ENCODE measurements at regions of chr1 and their contacts with region 1.

Region 1: DNA sequence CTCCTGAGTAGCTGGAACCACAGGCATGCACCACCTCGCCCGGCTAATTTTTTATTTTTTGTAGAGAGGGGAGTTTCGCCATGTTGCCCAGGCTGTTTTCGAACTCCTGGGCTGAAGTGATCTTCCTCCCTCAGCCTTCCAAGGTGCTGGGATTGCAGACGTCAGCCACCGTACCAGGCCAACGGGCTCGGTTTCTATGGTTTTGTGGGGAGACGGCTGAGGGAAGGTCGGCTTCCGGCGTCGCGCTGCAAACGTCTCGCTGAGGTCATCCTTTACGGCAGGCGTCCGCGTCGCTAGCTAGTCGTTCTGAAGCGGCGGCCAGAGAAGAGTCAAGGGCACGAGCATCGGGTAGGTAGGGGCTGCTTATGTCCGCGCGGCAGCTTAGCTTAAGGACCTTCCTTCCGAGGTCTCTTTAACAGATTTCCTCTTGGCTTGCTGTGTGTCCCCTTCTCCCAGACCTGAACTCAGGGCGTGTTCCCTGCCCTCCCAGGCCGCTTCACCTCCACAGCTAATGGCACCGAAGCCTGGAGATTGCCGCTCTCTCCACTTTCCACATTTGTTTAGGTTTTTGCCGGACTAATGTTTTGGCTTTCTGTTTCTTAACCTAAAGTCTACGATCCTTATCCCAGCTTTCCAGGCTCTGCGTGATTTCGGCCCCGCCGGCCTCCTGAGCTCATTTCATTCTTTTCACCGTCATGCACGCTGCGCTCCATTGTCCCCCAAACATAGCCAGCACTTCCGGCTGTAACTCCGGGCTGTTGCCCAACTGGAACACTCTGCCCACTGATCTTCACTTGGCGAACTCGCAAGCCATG is at the start of gene NDUFS5:
- DNase-seq: peak; percentile 76
- ATAC-seq: peak; percentile 87
- H3K4me3 ChIP-seq: peak within 1 kb of the TSS; percentile 81 to 97 (median 87)
- H3K27ac ChIP-seq: peak within 1 kb of the TSS; percentile 86
- H3K4me1 ChIP-seq: peaks cover 41% of the 10 kb centered on the region
- H3K27me3 ChIP-seq: no peaks in the 10 kb centered on the region; a peak in 1 of 5 replicates
- CTCF ChIP-seq: no peak
- EP300 ChIP-seq: no peak
- POLR2A ChIP-seq: peak; percentile 92 to 93
- RAD21 ChIP-seq: no peak
- total RNA-seq, gene NDUFS5: 466 and 655 TPM in 2 replicates

Region 2: DNA sequence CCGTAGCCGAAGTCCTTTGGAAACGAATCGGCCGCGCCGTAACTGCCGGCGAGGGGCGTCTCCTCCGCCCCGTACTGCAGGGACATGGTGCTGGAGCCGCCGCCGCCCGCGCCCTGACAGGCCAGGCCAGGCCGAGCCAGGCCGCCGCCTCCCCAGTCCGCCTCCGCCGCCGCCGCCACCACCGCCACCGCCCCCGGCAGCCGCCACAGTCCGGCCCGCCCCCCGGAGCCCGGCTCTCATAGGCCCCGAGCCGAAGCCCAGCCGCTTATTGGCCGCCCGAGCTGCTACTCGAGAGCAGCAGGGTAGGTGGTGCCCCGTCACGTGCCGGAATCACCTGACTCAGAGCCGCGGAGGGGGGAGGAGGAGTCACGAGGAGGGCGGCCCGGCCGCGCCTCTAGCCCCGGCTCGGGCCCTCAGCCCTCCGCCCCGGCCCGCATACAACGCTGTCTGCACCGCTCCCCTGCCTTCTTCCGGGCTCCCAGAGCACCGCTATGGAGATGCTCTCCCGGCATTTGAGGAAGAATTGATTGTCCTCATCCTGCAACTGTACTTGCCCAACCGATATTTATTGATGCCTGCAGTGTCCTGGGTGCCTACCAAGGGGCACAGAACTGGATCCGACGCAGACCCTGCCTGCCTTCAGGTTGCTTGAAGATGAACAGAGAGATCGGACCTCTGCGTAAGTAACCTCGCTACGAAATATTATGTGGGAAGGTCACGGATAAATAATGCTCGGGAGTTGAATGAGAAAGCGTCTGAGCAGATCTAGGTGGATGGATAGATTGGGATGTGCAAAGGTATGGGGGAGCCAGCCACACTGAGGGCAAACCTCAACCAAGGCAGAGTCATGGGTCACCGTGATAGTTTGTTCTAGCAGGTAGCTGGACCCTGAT is 166.5 kb before region 1 on chr1 and contains the start of gene RRAGC:
- CTCF ChIA-PET with region 1: no interaction called
- POLR2A ChIA-PET with region 1: interaction called, 6 read pairs
- in situ Hi-C with region 1: no loop called
- intact Hi-C with region 1: loop called (anchors 2 kb)
- DNase-seq: peak; percentile 95
- ATAC-seq: peak; percentile 96
- H3K4me3 ChIP-seq: peak within 1 kb of the TSS; percentile 77 to 98 (median 97)
- H3K27ac ChIP-seq: peak within 1 kb of the TSS; percentile 67
- H3K4me1 ChIP-seq: peaks cover 59% of the 10 kb centered on the region
- H3K27me3 ChIP-seq: no peaks in the 10 kb centered on the region; a peak in 1 of 5 replicates
- CTCF ChIP-seq: no peak
- EP300 ChIP-seq: peak; percentile 41 to 42; a peak in 3 of 4 replicates
- POLR2A ChIP-seq: peak; percentile 40 to 66
- RAD21 ChIP-seq: no peak; the same call in 1 of the 2 replicates
- total RNA-seq, gene RRAGC: 7.6 and 15.4 TPM in 2 replicates

Region 3: DNA sequence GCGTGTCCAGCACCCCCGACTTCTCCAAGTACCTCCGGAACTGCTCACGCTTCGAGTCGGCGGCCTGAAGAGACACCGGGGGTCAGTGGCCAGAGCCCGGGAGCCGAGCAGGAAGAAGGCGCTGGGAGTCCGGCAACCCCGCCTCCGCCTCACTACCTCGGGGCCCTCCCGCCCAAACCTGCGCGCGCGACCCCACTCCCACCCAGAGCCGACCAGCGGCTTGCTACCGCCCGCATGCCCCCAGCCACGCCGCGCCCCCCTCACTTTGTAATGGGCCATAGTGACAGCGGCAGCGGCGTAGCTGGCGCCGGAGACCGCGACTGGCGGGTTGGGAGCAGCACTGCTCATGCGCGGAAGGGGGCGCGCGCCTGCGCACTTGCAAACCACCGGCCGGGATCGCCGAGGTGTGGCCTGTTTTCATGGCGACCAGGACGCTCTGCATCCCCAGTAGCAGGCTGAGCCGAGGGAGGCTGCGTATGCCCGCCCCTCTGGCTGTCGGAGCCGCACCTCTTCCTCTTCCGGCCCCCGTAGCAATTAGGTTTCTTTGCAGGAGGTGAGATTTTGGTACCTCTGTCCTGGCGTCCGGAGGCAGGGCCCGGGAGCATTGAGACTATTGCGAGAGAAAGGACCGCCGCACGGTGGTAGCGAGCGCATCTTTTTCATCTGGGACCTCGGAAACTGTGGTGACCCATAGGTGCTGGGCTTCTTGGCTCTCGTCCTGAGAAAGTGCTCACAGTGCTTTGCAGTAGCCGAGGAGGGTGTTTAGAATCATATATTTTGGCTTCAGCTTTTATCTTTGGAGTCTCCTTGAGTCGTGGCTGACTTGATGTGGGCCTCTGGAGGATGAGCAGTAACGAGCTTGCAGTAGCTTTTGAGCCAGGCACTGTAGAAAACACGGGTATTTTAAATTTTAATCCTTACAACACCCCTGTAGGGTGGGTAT is 153.0 kb before region 1 on chr1 and contains the start of gene MYCBP:
- CTCF ChIA-PET with region 1: no interaction called
- POLR2A ChIA-PET with region 1: interaction called, 3 read pairs
- in situ Hi-C with region 1: no loop called
- intact Hi-C with region 1: loop called (anchors 5 kb)
- DNase-seq: peak; percentile 89
- ATAC-seq: peak; percentile 99
- H3K4me3 ChIP-seq: peak within 1 kb of the TSS; percentile 70 to 94 (median 77)
- H3K27ac ChIP-seq: peak within 1 kb of the TSS; percentile 49
- H3K4me1 ChIP-seq: peaks cover 36% of the 10 kb centered on the region
- H3K27me3 ChIP-seq: no peaks in the 10 kb centered on the region
- CTCF ChIP-seq: peak; percentile 32
- EP300 ChIP-seq: no peak
- POLR2A ChIP-seq: peak in 1 of 2 experiments; percentile 54; a peak in 1 of 4 replicates
- RAD21 ChIP-seq: no peak; the same call in 1 of the 2 replicates
- total RNA-seq, gene MYCBP: 30.4 and 48.0 TPM in 2 replicates

Region 4: DNA sequence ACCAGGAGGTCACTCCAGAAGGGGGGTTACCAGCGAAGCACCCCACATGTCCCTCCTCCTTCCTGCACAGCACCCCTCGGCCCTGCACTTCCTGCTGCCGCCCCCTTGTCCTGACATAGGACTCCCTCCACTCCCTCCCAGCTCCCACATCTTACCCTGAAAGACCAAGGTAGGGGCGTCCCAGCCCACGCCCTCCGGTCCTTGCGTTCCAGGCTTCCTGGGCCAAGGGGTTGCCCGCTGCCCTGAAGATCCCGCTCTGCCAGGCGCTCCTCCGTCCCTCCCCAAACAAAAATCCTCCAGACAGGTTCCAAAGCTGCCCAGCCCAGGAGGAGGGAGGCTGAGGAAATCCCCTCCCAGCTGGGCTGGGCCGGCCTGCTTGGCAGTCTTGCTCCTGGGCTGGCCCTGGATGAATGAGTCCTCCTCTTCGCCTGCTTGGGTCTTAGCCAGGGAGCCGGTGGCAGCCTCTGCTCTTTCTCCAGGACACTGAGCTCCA is 84.7 kb before region 1 on chr1 and contains the start of gene RHBDL2:
- CTCF ChIA-PET with region 1: no interaction called
- POLR2A ChIA-PET with region 1: interaction called, 3 read pairs
- in situ Hi-C with region 1: no loop called
- intact Hi-C with region 1: loop called (anchors 2 kb)
- DNase-seq: no peak
- ATAC-seq: peak; percentile 63
- H3K4me3 ChIP-seq: peak within 1 kb of the TSS; percentile 56 to 81 (median 75)
- H3K27ac ChIP-seq: peak within 1 kb of the TSS; percentile 72
- H3K4me1 ChIP-seq: peaks cover 80% of the 10 kb centered on the region
- H3K27me3 ChIP-seq: no peaks in the 10 kb centered on the region; a peak in 1 of 5 replicates
- CTCF ChIP-seq: no peak
- EP300 ChIP-seq: no peak
- POLR2A ChIP-seq: no peak
- RAD21 ChIP-seq: no peak
- total RNA-seq, gene RHBDL2: 3.4 and 5.4 TPM in 2 replicates

Region 5: DNA sequence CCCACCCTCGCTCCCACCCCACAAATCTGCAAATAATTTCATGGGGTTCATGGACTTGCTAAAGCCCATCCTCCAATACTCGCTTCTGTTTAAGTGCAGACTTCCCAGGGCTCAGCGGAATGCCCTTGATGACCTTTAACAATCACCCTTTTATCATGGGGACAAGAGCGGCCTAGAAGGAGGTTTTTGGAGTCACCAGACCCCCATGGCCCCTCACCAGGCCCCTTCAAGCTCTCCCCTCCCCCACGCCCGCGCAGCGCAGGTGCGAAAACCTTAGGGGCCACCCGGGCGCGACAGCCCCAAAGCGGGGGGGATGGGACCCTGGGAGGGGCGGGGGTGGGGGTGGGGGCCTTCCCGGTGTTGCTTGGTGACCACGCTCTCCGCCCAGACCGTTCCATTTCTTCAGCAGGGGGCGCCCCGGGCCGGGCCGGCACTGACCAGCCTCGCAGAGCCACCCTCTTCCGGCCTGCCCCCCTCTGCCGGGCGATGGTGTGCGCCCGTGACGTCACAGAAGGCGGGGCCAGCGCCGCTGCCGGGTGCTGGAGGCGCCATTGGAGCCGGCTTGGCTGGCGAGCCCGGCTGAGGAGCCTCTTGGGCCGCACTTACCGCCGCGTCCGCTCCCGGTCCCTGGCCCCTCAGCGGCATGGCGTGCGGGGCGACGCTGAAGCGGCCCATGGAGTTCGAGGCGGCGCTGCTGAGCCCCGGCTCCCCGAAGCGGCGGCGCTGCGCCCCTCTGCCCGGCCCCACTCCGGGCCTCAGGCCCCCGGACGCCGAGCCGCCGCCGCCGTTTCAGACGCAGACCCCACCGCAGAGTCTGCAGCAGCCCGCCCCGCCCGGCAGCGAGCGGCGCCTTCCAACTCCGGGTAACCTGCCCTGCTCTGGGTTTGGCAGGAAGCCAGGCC is 35.3 kb before region 1 on chr1 and contains the start of gene AKIRIN1:
- CTCF ChIA-PET with region 1: no interaction called
- POLR2A ChIA-PET with region 1: interaction called, 9 read pairs
- in situ Hi-C with region 1: no loop called
- intact Hi-C with region 1: loop called (anchors 5 kb)
- DNase-seq: peak; percentile 88
- ATAC-seq: peak; percentile 87
- H3K4me3 ChIP-seq: peak within 1 kb of the TSS; percentile 83 to 96 (median 92)
- H3K27ac ChIP-seq: peak within 1 kb of the TSS; percentile 85
- H3K4me1 ChIP-seq: peaks cover 75% of the 10 kb centered on the region
- H3K27me3 ChIP-seq: no peaks in the 10 kb centered on the region; a peak in 1 of 5 replicates
- CTCF ChIP-seq: 0 out of 2 replicates have a peak, but pooled peaks have one; percentile 10
- EP300 ChIP-seq: peak in 1 of 2 experiments; percentile 27; a peak in 1 of 4 replicates
- POLR2A ChIP-seq: peak; percentile 92 to 93
- RAD21 ChIP-seq: peak; percentile 80
- total RNA-seq, gene AKIRIN1: 123 and 154 TPM in 2 replicates

Region 6: DNA sequence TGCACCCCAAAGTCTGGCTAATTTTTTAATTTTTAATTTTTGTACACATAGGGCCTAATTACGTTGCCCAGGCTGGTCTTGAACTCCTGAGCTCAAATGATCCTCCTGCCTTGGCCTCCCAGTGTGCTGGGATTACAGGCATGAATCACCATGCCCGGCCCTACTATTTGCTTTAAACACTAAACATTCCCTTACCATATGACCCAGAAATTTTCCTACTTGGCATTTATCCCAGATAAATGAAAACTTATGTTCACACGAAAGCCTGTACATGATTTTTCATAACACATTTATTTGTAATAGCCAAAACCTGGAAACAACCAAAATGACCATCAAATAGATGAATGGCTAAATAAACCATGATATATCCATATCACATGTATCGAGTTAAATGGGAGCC is 35.7 kb after region 1 on chr1:
- CTCF ChIA-PET with region 1: no interaction called
- POLR2A ChIA-PET with region 1: no interaction called
- in situ Hi-C with region 1: no loop called
- intact Hi-C with region 1: no loop called
- DNase-seq: no peak
- ATAC-seq: no peak
- H3K4me3 ChIP-seq: no peak overlapping the region
- H3K27ac ChIP-seq: no peak overlapping the region
- H3K4me1 ChIP-seq: no peaks in the 10 kb centered on the region
- H3K27me3 ChIP-seq: no peaks in the 10 kb centered on the region
- CTCF ChIP-seq: no peak
- EP300 ChIP-seq: no peak
- POLR2A ChIP-seq: no peak
- RAD21 ChIP-seq: no peak

Region 7: GRCh38 chr1:39525366-39526165 is 499.3 kb after region 1 on chr1:
- CTCF ChIA-PET with region 1: no interaction called
- POLR2A ChIA-PET with region 1: no interaction called
- in situ Hi-C with region 1: no loop called
- intact Hi-C with region 1: no loop called
- DNase-seq: no peak
- ATAC-seq: no peak
- H3K4me3 ChIP-seq: no peak overlapping the region
- H3K27ac ChIP-seq: no peak overlapping the region
- H3K4me1 ChIP-seq: no peaks in the 10 kb centered on the region
- H3K27me3 ChIP-seq: no peaks in the 10 kb centered on the region
- CTCF ChIP-seq: no peak
- EP300 ChIP-seq: no peak
- POLR2A ChIP-seq: no peak
- RAD21 ChIP-seq: no peak

Measured in HepG2 (cell line).